ENCODE measurements at regions of chr19 and their contacts with region 1.

Region 1: DNA sequence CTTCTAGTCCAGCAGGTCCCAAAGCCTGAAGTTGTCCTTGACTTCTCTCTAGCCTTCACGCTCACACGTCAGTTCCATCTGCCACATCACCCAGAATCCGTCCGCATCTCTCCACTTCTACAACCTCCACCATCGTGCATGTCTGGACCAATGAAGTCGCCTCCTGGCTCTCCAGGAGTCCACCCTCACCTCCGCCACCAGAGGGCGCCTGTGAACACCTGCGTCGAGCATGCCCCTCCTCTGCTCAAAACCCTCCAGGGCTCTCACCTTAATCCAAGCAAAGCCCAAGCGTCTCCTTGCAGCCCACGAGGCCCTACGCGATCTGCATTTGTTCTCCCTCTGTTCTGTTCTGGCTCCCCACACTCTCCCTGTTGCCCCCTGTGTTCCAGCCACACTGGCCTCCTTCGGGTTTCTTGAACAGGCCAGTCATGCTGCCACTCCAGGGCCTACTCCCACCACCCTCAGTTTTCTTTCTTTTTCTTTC is 3.7 kb downstream of the USHBP1 start:
- DNase-seq: peak; percentile 94
- ATAC-seq: peak; percentile 100
- H3K4me3 Mint-ChIP-seq: no peak overlapping the region
- H3K27ac Mint-ChIP-seq: no peak overlapping the region
- H3K4me1 Mint-ChIP-seq: peaks cover 8% of the 10 kb centered on the region
- H3K27me3 Mint-ChIP-seq: no peaks in the 10 kb centered on the region
- CTCF ChIP-seq: peak; percentile 84

Region 2: GRCh38 chr19:17156927-17157302 is 104.0 kb before region 1 on chr19:
- CTCF ChIA-PET with region 1: no interaction called
- POLR2A ChIA-PET with region 1: no interaction called
- intact Hi-C with region 1: no loop called
- DNase-seq: no peak
- ATAC-seq: no peak
- H3K4me3 Mint-ChIP-seq: no peak overlapping the region
- H3K27ac Mint-ChIP-seq: no peak overlapping the region
- H3K4me1 Mint-ChIP-seq: no peaks in the 10 kb centered on the region
- H3K27me3 Mint-ChIP-seq: no peaks in the 10 kb centered on the region
- CTCF ChIP-seq: no peak

Region 3: GRCh38 chr19:17243990-17244385 is 16.9 kb before region 1 on chr19:
- CTCF ChIA-PET with region 1: interaction called, 17 read pairs
- POLR2A ChIA-PET with region 1: interaction called, 5 read pairs
- intact Hi-C with region 1: no loop called
- DNase-seq: no peak
- ATAC-seq: no peak
- H3K4me3 Mint-ChIP-seq: no peak overlapping the region
- H3K27ac Mint-ChIP-seq: no peak overlapping the region
- H3K4me1 Mint-ChIP-seq: peaks cover 9% of the 10 kb centered on the region
- H3K27me3 Mint-ChIP-seq: peaks cover 7% of the 10 kb centered on the region
- CTCF ChIP-seq: no peak

Measured in activated CD8-positive, alpha-beta T cell treated with anti-CD3 and anti-CD28 coated beads for 36 hours (primary cell).